Activated T-helper 2 cell treated with anti-CD3 and anti-CD28 coated beads, Interferon-gamma antibody, Interleukin-2, Interleukin-4, amounts not matched to agents 10 μg/mL and 5 μg/mL and 100 μg/mL, durations not matched to agents 14 hours and 24 hours and 36 hours (primary cell): ENCODE measurements at regions of chr6 and their contacts with region 1.

Region 1: DNA sequence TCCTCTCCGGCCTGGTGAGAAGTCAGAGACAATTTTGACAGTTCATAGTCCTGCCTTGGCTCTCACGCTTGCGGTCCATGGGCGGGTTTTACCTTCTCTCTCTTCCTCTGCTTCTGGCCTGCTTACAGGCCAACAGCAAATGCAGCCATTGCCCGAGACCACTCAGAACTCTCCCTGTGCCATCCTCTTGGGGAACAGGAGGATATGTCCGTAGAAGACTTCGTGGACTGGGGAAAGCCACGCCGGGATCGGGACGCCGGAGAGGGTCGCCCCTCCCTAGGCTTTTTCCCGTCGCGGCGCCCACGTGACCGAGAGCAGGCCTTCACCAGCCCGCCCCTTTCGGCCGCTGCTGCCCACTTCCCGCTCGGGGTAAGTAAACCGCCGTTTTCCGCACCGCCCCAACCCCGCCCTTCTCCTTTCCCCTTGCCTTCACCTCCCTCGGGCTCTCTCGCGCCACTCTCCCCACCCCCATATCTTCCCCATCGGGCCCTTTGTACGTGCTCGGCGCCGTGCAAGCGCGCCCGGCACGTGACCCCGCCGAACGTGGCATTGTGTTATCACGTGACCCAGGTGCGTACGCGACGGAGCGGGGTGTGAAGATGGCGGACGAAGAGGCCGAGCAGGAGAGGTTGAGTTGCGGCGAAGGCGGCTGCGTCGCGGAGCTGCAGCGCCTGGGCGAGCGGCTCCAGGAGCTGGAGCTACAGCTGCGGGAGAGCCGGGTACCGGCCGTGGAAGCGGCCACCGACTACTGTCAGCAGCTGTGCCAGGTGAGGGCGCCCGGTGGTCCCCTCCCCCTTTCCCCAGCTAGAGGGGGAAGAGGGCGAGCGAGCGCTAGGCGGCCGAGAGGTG is at the start of gene ZNF292:
- DNase-seq: peak; percentile 98
- H3K4me3 Mint-ChIP-seq: peak within 1 kb of the TSS; percentile 93
- H3K27ac Mint-ChIP-seq: peak within 1 kb of the TSS; percentile 99
- H3K4me1 Mint-ChIP-seq: peaks cover 41% of the 10 kb centered on the region
- H3K27me3 Mint-ChIP-seq: no peaks in the 10 kb centered on the region
- total RNA-seq, gene ZNF292: 56.2 and 62.7 TPM in 2 replicates

Region 2: GRCh38 chr6:87118054-87118453 is 37.2 kb before region 1 on chr6:
- intact Hi-C with region 1: no loop called
- DNase-seq: no peak
- H3K4me3 Mint-ChIP-seq: no peak overlapping the region
- H3K27ac Mint-ChIP-seq: no peak overlapping the region
- H3K4me1 Mint-ChIP-seq: peaks cover 7% of the 10 kb centered on the region
- H3K27me3 Mint-ChIP-seq: peaks cover 53% of the 10 kb centered on the region

Region 3: GRCh38 chr6:87174078-87174579 is 18.9 kb after region 1 on chr6:
- intact Hi-C with region 1: loop called (anchors 2 kb)
- DNase-seq: no peak
- H3K4me3 Mint-ChIP-seq: no peak overlapping the region
- H3K27ac Mint-ChIP-seq: peak overlapping the region; percentile 43
- H3K4me1 Mint-ChIP-seq: peaks cover 54% of the 10 kb centered on the region
- H3K27me3 Mint-ChIP-seq: no peaks in the 10 kb centered on the region

Region 4: GRCh38 chr6:87210979-87211378 is 55.8 kb after region 1 on chr6:
- intact Hi-C with region 1: loop called (anchors 2 kb)
- DNase-seq: no peak
- H3K4me3 Mint-ChIP-seq: no peak overlapping the region
- H3K27ac Mint-ChIP-seq: peak overlapping the region; percentile 58
- H3K4me1 Mint-ChIP-seq: peaks cover 51% of the 10 kb centered on the region
- H3K27me3 Mint-ChIP-seq: no peaks in the 10 kb centered on the region

Region 5: GRCh38 chr6:87241307-87241706 is 86.1 kb after region 1 on chr6:
- intact Hi-C with region 1: no loop called
- DNase-seq: no peak
- H3K4me3 Mint-ChIP-seq: no peak overlapping the region
- H3K27ac Mint-ChIP-seq: no peak overlapping the region
- H3K4me1 Mint-ChIP-seq: peaks cover 4% of the 10 kb centered on the region
- H3K27me3 Mint-ChIP-seq: no peaks in the 10 kb centered on the region

Region 6: DNA sequence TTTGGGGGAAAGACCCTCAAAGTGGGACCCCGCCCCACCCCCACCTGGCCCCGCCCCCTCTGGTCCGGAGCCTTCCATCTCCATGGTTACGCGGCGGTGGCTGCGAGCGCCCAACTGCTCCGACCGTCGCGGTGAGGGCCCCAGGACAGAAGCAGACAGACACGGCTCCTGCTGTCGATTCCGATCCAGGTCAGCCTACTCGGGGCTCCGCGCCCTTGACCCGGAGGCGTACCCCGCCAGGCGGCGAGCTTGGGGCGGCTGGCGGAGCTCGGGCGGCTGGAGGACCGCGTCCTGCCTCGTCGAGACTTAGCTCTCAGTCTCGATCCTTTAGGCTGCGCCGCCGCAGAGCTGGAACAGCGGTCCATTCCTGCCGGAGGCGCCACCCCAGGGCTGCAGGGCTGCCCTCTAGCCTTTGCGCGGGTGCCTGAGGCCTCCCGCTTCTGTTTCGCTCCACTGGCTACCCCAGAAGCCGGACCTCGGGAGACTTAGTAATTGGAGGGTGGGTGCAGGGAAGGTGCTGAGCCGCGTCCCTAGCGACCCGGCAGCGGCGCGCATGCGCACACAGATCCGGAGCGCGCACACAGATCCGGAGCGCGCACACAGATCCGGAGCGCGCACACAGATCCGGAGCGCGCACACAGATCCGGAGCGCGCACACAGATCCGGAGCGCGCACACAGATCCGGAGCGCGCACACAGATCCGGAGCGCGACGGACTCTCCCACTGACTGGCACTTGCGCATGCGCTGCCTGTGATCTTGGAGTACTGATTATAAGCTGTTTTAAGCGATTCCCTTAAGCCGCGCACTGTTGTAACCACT is 252.9 kb after region 1 on chr6 and contains the start of gene CFAP206:
- intact Hi-C with region 1: loop called (anchors 5 kb)
- DNase-seq: peak; percentile 70
- H3K4me3 Mint-ChIP-seq: peak within 1 kb of the TSS; percentile 79
- H3K27ac Mint-ChIP-seq: no peak within 1 kb of the TSS
- H3K4me1 Mint-ChIP-seq: peaks cover 7% of the 10 kb centered on the region
- H3K27me3 Mint-ChIP-seq: peaks cover 29% of the 10 kb centered on the region
- total RNA-seq, gene CFAP206: not detected in 2 replicates

Region 7: DNA sequence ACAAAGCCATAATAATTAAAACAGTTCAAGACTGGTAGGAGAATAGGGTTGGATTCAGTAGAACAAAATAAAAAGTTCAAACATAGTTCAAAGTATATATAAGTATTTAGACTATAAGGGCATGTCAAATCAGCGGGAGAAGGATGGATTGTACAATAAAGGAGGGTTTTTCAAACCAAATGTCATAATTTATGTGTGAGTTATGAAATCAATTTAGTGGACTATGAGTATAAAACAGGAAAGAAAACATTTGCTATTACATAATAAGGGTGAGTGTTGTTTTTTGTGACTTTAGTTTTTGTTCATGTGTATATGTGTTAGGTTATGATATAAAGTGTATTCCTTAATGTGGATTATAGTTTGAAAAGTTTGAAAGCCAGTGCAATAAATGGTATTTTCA is 445.4 kb after region 1 on chr6:
- intact Hi-C with region 1: no loop called
- DNase-seq: no peak
- H3K4me3 Mint-ChIP-seq: no peak overlapping the region
- H3K27ac Mint-ChIP-seq: no peak overlapping the region
- H3K4me1 Mint-ChIP-seq: peaks cover under 1% of the 10 kb centered on the region
- H3K27me3 Mint-ChIP-seq: no peaks in the 10 kb centered on the region

Region 8: DNA sequence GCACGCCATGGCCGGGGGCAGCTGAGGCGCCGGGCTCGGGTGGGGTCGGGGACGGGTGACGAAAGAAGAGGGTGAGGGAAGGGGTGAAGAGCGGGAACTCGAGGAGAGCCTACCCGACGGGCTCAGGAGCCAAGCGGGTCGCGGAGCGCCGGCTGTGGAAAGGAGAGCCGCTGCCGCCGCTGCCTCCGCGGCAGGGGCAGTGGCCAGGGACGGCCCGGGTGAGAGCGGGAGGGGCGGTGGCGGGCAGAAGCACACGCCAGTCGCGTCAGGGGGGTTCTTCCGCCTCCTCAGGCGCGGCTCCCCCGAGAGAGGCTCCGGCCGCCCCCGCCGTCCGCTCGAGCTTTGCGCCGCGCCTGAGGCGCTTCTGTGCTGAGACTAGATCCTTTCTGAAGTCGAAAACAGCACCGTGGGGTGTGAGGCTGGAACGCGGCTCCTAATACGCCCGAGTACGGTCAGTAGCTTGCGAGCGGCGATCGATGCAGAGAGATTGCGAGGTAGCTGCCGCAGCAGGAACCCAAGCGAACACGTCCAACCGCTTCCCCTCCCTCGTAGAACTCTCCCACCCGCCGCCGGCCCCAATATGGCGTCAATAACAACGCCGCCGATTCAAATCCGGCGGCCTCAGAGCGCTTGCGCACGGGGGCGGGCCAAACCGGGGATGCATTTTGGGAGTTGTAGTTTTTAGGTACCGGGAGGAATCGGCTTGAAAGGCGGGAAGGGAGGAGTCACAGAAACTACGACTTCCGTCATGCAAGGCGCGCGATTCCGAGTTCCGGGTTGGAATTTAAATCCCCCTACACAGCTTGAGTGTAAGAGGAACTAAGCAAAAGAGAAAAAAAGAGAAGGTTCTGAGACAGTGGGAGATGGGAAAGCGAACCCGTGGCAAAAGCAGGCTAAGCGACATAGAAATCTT is 546.7 kb after region 1 on chr6 and contains the start of gene AKIRIN2:
- intact Hi-C with region 1: loop called (anchors 1 kb)
- DNase-seq: peak; percentile 96
- H3K4me3 Mint-ChIP-seq: peak within 1 kb of the TSS; percentile 98
- H3K27ac Mint-ChIP-seq: peak within 1 kb of the TSS; percentile 94
- H3K4me1 Mint-ChIP-seq: peaks cover 34% of the 10 kb centered on the region
- H3K27me3 Mint-ChIP-seq: no peaks in the 10 kb centered on the region
- total RNA-seq, gene AKIRIN2: 41.9 and 42.0 TPM in 2 replicates